GM12878 (cell line): ENCODE measurements at regions of chr19 and their contacts with region 1.

Region 1: DNA sequence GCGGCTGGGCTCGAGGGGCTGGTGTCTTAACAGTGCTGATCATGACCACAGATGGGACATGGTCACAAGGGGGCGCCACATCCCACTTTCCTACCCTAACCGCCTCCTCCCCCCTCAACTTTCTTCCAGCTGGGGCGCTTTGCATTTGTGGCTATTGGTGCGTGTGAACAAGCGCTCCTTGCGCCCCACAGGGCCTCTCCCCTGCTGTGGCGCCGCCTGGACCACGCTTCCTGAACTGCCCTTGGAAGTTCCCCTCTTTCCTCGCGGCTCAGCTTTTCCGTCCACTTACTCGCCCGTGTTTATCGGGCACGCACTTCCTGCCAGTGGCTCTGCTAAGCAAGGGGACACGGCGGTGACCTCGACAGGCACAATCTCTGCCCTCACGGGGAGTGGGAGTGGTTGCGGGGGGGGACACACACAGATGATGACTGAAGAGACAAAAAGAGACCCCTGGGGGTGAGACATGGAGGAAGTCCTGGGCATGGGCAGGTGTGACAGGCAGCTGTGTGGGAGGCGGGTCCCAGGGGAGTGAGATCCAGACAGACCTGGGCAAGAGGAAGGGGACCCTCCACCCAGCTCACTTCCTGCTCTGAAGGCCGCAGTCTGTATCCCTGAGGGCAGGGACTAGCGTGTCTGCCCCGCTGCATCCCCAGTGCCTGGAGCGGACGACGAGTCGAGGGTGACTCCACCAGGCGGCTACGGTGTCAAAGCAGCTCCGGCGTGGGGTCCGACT is 40.3 kb downstream of the ZNF787 start:
- DNase-seq: peak; percentile 38
- ATAC-seq: peak; percentile 89
- H3K4me3 ChIP-seq: peak overlapping the region; percentile 61; the same call in 1 of the 2 replicates
- H3K27ac ChIP-seq: peak overlapping the region; percentile 3; the same call in 1 of the 2 replicates
- H3K4me1 ChIP-seq: peaks cover 5% of the 10 kb centered on the region; the same call in 1 of the 2 replicates
- H3K27me3 ChIP-seq: no peaks in the 10 kb centered on the region
- CTCF ChIP-seq: peak; percentile 64 to 69 (median 64)
- EP300 ChIP-seq: peak; percentile 57 to 58; a peak in 1 of 4 replicates
- POLR2A ChIP-seq: peak; percentile 62; the same call in 1 of the 2 replicates
- RAD21 ChIP-seq: peak; percentile 60

Region 2: GRCh38 chr19:56026769-56027168 is 54.1 kb before region 1 on chr19:
- CTCF ChIA-PET with region 1: no interaction called
- POLR2A ChIA-PET with region 1: no interaction called
- RAD21 ChIA-PET with region 1: no interaction called
- SMC1A ChIA-PET with region 1: no interaction called
- in situ Hi-C with region 1: no loop called
- intact Hi-C with region 1: no loop called
- DNase-seq: no peak
- ATAC-seq: no peak
- H3K4me3 ChIP-seq: no peak overlapping the region
- H3K27ac ChIP-seq: no peak overlapping the region
- H3K4me1 ChIP-seq: no peaks in the 10 kb centered on the region
- H3K27me3 ChIP-seq: no peaks in the 10 kb centered on the region
- CTCF ChIP-seq: no peak
- EP300 ChIP-seq: no peak
- POLR2A ChIP-seq: no peak
- RAD21 ChIP-seq: no peak

Region 3: GRCh38 chr19:56170261-56170660 is 89.4 kb after region 1 on chr19:
- CTCF ChIA-PET with region 1: interaction called, 32 read pairs
- POLR2A ChIA-PET with region 1: no interaction called
- RAD21 ChIA-PET with region 1: interaction called, 13 read pairs
- SMC1A ChIA-PET with region 1: interaction called, 16 read pairs
- in situ Hi-C with region 1: loop called (anchors 5 kb)
- intact Hi-C with region 1: loop called (anchors 1 kb)
- DNase-seq: no peak
- ATAC-seq: no peak
- H3K4me3 ChIP-seq: no peak overlapping the region
- H3K27ac ChIP-seq: no peak overlapping the region
- H3K4me1 ChIP-seq: no peaks in the 10 kb centered on the region
- H3K27me3 ChIP-seq: no peaks in the 10 kb centered on the region; a peak in 1 of 4 replicates
- CTCF ChIP-seq: no peak
- EP300 ChIP-seq: no peak
- POLR2A ChIP-seq: no peak
- RAD21 ChIP-seq: no peak